Mammary epithelial cell (primary cell): ENCODE measurements at regions of chr3 and their contacts with region 1.

Region 1: DNA sequence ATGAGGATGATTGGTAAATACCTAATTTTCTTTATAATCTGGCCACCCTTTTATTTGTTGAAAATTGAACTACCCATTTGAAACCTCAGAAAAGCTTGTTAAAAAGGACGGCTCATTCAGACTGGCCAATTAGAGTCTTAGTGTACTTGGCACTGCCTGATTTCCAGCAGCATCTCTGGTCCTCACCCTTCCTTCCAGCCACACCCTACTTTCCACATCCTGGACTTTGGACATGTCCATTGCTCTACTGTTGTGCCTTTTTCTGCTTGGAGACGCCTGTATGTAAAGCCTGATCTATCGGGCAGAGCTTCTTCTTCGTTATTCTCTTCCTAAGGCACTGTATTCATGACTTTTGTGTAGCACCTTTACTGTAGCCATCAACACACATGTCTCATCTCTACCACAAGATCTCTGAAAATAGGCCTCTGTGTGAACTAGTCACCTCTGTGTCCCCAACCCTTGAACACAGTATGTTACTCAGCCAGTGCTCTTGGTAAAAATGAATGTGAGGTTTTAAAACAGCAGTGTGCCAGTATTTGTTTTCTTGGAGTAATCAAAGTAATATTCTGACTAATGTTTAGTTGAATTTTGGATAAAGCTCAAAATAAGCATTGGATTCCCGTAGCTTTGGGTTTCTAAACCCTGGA is 6.8 kb downstream of the RBM5 start:
- DNase-seq: no peak
- H3K4me3 ChIP-seq: no peak overlapping the region
- H3K27ac ChIP-seq: no peak overlapping the region
- H3K4me1 ChIP-seq: peaks cover 9% of the 10 kb centered on the region
- H3K27me3 ChIP-seq: no peaks in the 10 kb centered on the region
- CTCF ChIP-seq: no peak

Region 2: GRCh38 chr3:49775538-49775937 is 319.9 kb before region 1 on chr3:
- CTCF ChIA-PET with region 1: no interaction called
- dilution Hi-C with region 1: loop called (anchors 10 kb)
- in situ Hi-C with region 1: no loop called
- intact Hi-C with region 1: no loop called
- DNase-seq: no peak
- H3K4me3 ChIP-seq: no peak overlapping the region
- H3K27ac ChIP-seq: no peak overlapping the region
- H3K4me1 ChIP-seq: no peaks in the 10 kb centered on the region
- H3K27me3 ChIP-seq: no peaks in the 10 kb centered on the region
- CTCF ChIP-seq: no peak

Region 3: GRCh38 chr3:50132421-50133282 is 37.2 kb after region 1 on chr3:
- CTCF ChIA-PET with region 1: no interaction called
- dilution Hi-C with region 1: loop called (anchors 5 kb)
- in situ Hi-C with region 1: no loop called
- intact Hi-C with region 1: no loop called
- DNase-seq: no peak
- H3K4me3 ChIP-seq: no peak overlapping the region
- H3K27ac ChIP-seq: no peak overlapping the region
- H3K4me1 ChIP-seq: no peaks in the 10 kb centered on the region
- H3K27me3 ChIP-seq: no peaks in the 10 kb centered on the region
- CTCF ChIP-seq: no peak

Region 4: DNA sequence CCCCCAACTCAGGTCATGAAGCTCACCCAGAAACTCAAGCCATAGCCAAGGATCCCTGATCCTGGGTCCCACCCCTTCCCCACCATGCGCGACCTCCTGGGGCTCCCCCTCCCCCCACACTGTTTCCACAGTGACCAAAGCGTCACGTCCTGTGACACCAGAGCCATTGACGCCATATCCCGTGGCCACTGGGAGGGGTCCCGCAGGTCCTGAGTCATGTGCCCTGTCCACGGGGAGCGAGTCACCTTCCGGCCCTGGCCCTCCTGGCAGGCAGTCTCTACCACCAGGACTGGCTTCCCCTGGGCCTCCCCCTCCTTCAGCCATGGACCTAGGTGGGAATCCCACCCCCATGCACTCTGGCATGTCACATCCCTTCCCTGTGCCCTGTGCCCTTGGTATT is 75.2 kb after region 1 on chr3:
- CTCF ChIA-PET with region 1: no interaction called
- dilution Hi-C with region 1: loop called (anchors 10 kb)
- in situ Hi-C with region 1: no loop called
- intact Hi-C with region 1: no loop called
- DNase-seq: peak; percentile 53
- H3K4me3 ChIP-seq: no peak overlapping the region
- H3K27ac ChIP-seq: no peak overlapping the region
- H3K4me1 ChIP-seq: peaks cover 36% of the 10 kb centered on the region
- H3K27me3 ChIP-seq: no peaks in the 10 kb centered on the region
- CTCF ChIP-seq: no peak